ENCODE measurements at regions of chr15 and their contacts with region 1.

Region 1: GRCh38 chr15:99454941-99455788 is 110.6 kb upstream of the MEF2A start:
- DNase-seq: peak; percentile 99
- H3K4me3 ChIP-seq: no peak overlapping the region
- H3K27ac ChIP-seq: peak overlapping the region; percentile 93
- H3K4me1 ChIP-seq: peaks cover 39% of the 10 kb centered on the region
- H3K27me3 ChIP-seq: no peaks in the 10 kb centered on the region
- CTCF ChIP-seq: no peak

Region 2: GRCh38 chr15:98978153-98978552 is 477.0 kb before region 1 on chr15:
- CTCF ChIA-PET with region 1: no interaction called
- dilution Hi-C with region 1: no loop called
- in situ Hi-C with region 1: no loop called
- intact Hi-C with region 1: no loop called
- DNase-seq: peak; percentile 31
- H3K4me3 ChIP-seq: no peak overlapping the region
- H3K27ac ChIP-seq: no peak overlapping the region
- H3K4me1 ChIP-seq: no peaks in the 10 kb centered on the region
- H3K27me3 ChIP-seq: no peaks in the 10 kb centered on the region
- CTCF ChIP-seq: no peak

Region 3: GRCh38 chr15:99476413-99477222 is 21.5 kb after region 1 on chr15:
- CTCF ChIA-PET with region 1: no interaction called
- dilution Hi-C with region 1: no loop called
- in situ Hi-C with region 1: no loop called
- intact Hi-C with region 1: loop called (anchors 1 kb)
- DNase-seq: peak; percentile 98
- H3K4me3 ChIP-seq: no peak overlapping the region
- H3K27ac ChIP-seq: peak overlapping the region; percentile 23
- H3K4me1 ChIP-seq: peaks cover 25% of the 10 kb centered on the region
- H3K27me3 ChIP-seq: no peaks in the 10 kb centered on the region
- CTCF ChIP-seq: no peak